Heart right ventricle (tissue), 16 donors: ENCODE measurements at regions of chr17 and their contacts with region 1.

Region 1: DNA sequence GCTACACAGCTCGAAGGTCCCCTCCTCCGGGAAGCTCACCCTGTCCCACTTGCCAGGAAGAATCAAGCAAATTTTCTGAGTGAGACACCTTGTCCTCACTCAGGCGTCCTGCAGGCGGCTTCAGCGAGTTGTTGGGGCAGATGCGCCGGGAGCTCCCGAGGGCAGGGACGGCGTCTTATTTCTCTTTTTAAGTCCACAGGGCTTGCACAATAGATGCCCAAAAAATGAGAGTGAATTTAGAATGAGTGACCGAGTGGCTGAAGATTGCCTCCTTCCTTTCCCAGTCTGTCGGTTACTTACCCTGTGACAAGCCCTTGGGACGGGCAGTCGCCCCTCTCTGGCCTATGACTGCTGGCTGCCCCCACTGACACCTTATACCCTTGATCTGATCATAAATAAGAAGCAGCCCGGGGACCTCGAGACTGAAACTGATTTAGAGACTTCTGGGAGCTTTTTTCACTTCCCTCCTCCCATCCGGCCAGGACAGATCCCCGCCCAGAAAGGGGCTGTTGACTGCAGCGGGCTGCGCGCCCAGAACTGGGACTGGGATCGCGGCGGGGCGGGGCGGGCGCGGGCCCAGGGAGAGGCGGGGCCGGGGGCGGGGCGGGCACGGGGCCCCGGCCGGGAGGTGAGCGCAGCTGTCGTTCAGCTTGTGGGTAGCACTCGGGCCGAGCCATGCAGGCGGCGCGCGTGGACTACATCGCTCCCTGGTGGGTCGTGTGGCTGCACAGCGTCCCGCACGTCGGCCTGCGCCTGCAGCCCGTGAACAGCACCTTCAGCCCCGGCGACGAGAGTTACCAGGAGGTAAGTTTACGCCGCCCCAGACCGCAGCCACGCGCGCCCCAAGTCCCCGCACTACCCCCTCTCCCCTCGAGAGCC is at the start of gene TTYH2:
- DNase-seq: peak; percentile 90 to 94
- ATAC-seq: peak; percentile 80 to 91 (median 86)
- H3K4me3 ChIP-seq: peak within 1 kb of the TSS; percentile 37 to 72 (median 64)
- H3K27ac ChIP-seq: peak within 1 kb of the TSS; percentile 54 to 93 (median 86)
- H3K4me1 ChIP-seq: peaks cover 22 to 86% (median 74%) of the 10 kb centered on the region in 9 donors
- H3K27me3 ChIP-seq: no peaks in the 10 kb centered on the region
- CTCF ChIP-seq: peak in 6 of 9 donors; percentile 7 to 38 (median 32)
- total RNA-seq, gene TTYH2: 20.9 to 36.3 (median 26.1) TPM

Region 2: GRCh38 chr17:74059479-74060240 is 153.5 kb before region 1 on chr17:
- intact Hi-C with region 1: no loop called
- DNase-seq: no peak
- ATAC-seq: no peak
- H3K4me3 ChIP-seq: no peak overlapping the region
- H3K27ac ChIP-seq: no peak overlapping the region
- H3K4me1 ChIP-seq: no peaks in the 10 kb centered on the region
- H3K27me3 ChIP-seq: peaks cover 0 to 69% (median 53%) of the 10 kb centered on the region in 7 donors
- CTCF ChIP-seq: no peak

Region 3: GRCh38 chr17:74245145-74245831 is 32.1 kb after region 1 on chr17:
- intact Hi-C with region 1: loop called in 2 of 10 experiments (anchors 2 kb)
- DNase-seq: no peak
- ATAC-seq: no peak
- H3K4me3 ChIP-seq: no peak overlapping the region
- H3K27ac ChIP-seq: no peak overlapping the region
- H3K4me1 ChIP-seq: peaks cover 14 to 48% (median 38%) of the 10 kb centered on the region in 9 donors
- H3K27me3 ChIP-seq: no peaks in the 10 kb centered on the region
- CTCF ChIP-seq: no peak

Region 4: GRCh38 chr17:74296548-74296936 is 83.4 kb after region 1 on chr17:
- intact Hi-C with region 1: loop called (anchors 1 to 5 kb)
- DNase-seq: peak; percentile 62 to 81
- ATAC-seq: peak; percentile 62 to 87 (median 82)
- H3K4me3 ChIP-seq: no peak overlapping the region
- H3K27ac ChIP-seq: peak overlapping the region; percentile 67 to 92 (median 83)
- H3K4me1 ChIP-seq: peaks cover 0 to 22% (median 8%) of the 10 kb centered on the region in 9 donors
- H3K27me3 ChIP-seq: peaks cover 0 to 5% (median 0%) of the 10 kb centered on the region in 7 donors
- CTCF ChIP-seq: peak; percentile 42 to 84 (median 65)

Region 5: GRCh38 chr17:74361230-74362068 is 148.3 kb after region 1 on chr17 and contains the start of gene BTBD17:
- intact Hi-C with region 1: loop called in 8 of 10 experiments (anchors 5 to 10 kb)
- DNase-seq: peak; percentile 46 to 70
- ATAC-seq: peak; percentile 75 to 90 (median 82)
- H3K4me3 ChIP-seq: no peak within 1 kb of the TSS
- H3K27ac ChIP-seq: no peak within 1 kb of the TSS
- H3K4me1 ChIP-seq: peaks cover 0 to 18% (median 9%) of the 10 kb centered on the region in 9 donors
- H3K27me3 ChIP-seq: peaks cover 9 to 66% (median 61%) of the 10 kb centered on the region in 7 donors
- CTCF ChIP-seq: peak; percentile 52 to 83 (median 79)
- total RNA-seq, gene BTBD17: not detected

Region 6: DNA sequence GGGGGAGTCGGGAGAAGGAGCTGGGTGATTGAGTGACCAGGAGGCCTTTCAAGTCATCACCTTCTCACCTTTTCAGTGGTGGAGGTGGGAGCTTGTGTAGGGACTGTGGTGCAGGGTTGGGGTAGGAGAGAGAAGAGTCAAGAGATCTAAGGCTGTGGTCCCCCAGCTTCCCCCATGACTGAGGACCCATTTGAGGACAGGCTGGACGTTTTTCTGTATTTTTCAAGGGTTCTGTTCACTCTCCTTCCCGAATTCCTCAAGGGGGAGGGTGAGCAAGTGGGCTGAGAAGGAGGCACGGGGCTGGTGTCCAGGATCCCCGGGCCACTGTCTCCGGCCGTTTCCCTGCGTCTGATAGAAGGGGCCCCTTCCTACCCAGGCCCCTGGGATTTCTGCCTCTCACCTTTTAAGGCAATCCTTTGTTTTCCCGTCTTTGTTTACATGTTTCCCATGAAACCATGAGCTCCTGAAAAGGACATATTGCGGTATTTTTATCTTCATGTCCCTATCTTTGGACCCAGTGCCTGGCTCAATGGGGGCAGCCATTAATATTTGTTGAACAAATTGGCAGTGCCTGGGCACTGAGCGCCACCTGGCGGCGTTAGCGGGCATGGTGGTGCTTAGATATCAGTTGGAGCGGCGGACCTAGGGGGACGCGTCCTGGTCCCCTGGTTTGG is 244.1 kb after region 1 on chr17:
- intact Hi-C with region 1: loop called in 6 of 10 experiments (anchors 10 kb)
- DNase-seq: peak; percentile 81 to 84
- ATAC-seq: peak in 5 of 8 donors; percentile 17 to 28 (median 23)
- H3K4me3 ChIP-seq: peak overlapping the region in 3 of 10 donors; percentile 4 to 21 (median 8)
- H3K27ac ChIP-seq: peak overlapping the region in 5 of 10 donors; percentile 13 to 47 (median 28)
- H3K4me1 ChIP-seq: peaks cover 23 to 56% (median 40%) of the 10 kb centered on the region in 9 donors
- H3K27me3 ChIP-seq: peaks cover 0 to 9% (median 0%) of the 10 kb centered on the region in 7 donors
- CTCF ChIP-seq: peak; percentile 91 to 99 (median 96)